OCI-LY7 (cell line): ENCODE measurements at regions of chr6 and their contacts with region 1.

Region 1: GRCh38 chr6:25223490-25223991 is 55.6 kb upstream of the CARMIL1 start:
- DNase-seq: peak; percentile 79
- H3K4me3 ChIP-seq: peak overlapping the region; percentile 62
- H3K27ac ChIP-seq: no peak overlapping the region
- H3K4me1 ChIP-seq: peaks cover 27% of the 10 kb centered on the region
- CTCF ChIP-seq: peak; percentile 100

Region 2: GRCh38 chr6:23688650-23689049 is 1534.9 kb before region 1 on chr6:
- CTCF ChIA-PET with region 1: no interaction called
- POLR2A ChIA-PET with region 1: no interaction called
- intact Hi-C with region 1: no loop called
- DNase-seq: no peak
- H3K4me3 ChIP-seq: no peak overlapping the region
- H3K27ac ChIP-seq: no peak overlapping the region
- H3K4me1 ChIP-seq: no peaks in the 10 kb centered on the region
- CTCF ChIP-seq: no peak

Region 3: GRCh38 chr6:24752917-24753490 is 470.5 kb before region 1 on chr6:
- CTCF ChIA-PET with region 1: no interaction called
- POLR2A ChIA-PET with region 1: no interaction called
- intact Hi-C with region 1: no loop called
- DNase-seq: no peak
- H3K4me3 ChIP-seq: no peak overlapping the region
- H3K27ac ChIP-seq: no peak overlapping the region
- H3K4me1 ChIP-seq: no peaks in the 10 kb centered on the region
- CTCF ChIP-seq: no peak

Region 4: DNA sequence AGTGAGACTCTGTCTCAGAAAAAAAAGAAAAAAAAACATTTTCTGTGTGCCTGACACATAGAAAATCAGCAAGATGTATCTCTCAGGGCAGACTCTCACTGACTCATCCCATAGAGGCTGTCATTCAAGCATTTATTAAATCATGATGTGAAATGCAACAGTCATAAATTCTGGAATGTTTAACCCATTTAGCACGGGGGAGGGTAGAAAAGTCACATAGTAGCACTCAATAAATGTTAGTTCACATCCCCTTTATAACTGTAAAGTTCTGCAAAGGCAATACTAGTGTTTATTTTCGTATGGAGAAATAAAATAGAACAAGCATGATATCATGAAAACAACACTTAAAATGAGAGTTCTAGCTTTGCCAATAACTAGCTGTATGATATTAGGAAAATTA is 40.1 kb after region 1 on chr6:
- CTCF ChIA-PET with region 1: no interaction called
- POLR2A ChIA-PET with region 1: no interaction called
- intact Hi-C with region 1: loop called (anchors 2 kb)
- DNase-seq: no peak
- H3K4me3 ChIP-seq: no peak overlapping the region
- H3K27ac ChIP-seq: no peak overlapping the region
- H3K4me1 ChIP-seq: peaks cover 12% of the 10 kb centered on the region
- CTCF ChIP-seq: no peak

Region 5: GRCh38 chr6:25435416-25435985 is 212.0 kb after region 1 on chr6:
- CTCF ChIA-PET with region 1: no interaction called
- POLR2A ChIA-PET with region 1: no interaction called
- intact Hi-C with region 1: no loop called
- DNase-seq: no peak
- H3K4me3 ChIP-seq: no peak overlapping the region
- H3K27ac ChIP-seq: no peak overlapping the region
- H3K4me1 ChIP-seq: peaks cover 31% of the 10 kb centered on the region
- CTCF ChIP-seq: no peak

Region 6: GRCh38 chr6:25490018-25490801 is 266.7 kb after region 1 on chr6:
- CTCF ChIA-PET with region 1: no interaction called
- POLR2A ChIA-PET with region 1: no interaction called
- intact Hi-C with region 1: loop called (anchors 2 kb)
- DNase-seq: peak; percentile 93
- H3K4me3 ChIP-seq: no peak overlapping the region
- H3K27ac ChIP-seq: peak overlapping the region; percentile 55
- H3K4me1 ChIP-seq: peaks cover 23% of the 10 kb centered on the region
- CTCF ChIP-seq: peak; percentile 90

Region 7: DNA sequence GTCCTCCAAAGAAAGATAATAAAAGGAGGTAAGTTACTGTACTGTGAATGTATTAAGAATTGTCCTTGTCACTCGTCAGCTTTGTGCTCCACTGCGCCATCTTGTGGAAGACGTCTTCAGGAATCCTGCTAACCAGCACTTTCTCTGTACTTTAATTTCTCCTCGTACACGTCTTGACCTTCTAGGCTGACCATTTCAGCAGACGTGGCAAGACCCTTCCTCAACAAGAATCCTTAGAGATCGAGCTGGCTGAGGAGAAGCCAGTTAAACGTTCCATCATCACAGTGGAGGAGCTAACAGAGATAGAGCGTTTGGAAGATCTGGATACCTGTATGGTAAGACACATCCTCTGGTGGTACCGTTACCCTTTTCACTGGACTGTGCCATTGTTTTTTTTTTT is 333.0 kb after region 1 on chr6:
- CTCF ChIA-PET with region 1: no interaction called
- POLR2A ChIA-PET with region 1: no interaction called
- intact Hi-C with region 1: loop called (anchors 2 kb)
- DNase-seq: peak; percentile 80
- H3K4me3 ChIP-seq: no peak overlapping the region
- H3K27ac ChIP-seq: no peak overlapping the region
- H3K4me1 ChIP-seq: peaks cover 7% of the 10 kb centered on the region
- CTCF ChIP-seq: peak; percentile 97

Region 8: GRCh38 chr6:25601800-25602673 is 378.5 kb after region 1 on chr6:
- CTCF ChIA-PET with region 1: interaction called, 3 read pairs
- POLR2A ChIA-PET with region 1: no interaction called
- intact Hi-C with region 1: loop called (anchors 1 kb)
- DNase-seq: peak; percentile 71
- H3K4me3 ChIP-seq: no peak overlapping the region
- H3K27ac ChIP-seq: no peak overlapping the region
- H3K4me1 ChIP-seq: peaks cover 5% of the 10 kb centered on the region
- CTCF ChIP-seq: peak; percentile 98

Region 9: DNA sequence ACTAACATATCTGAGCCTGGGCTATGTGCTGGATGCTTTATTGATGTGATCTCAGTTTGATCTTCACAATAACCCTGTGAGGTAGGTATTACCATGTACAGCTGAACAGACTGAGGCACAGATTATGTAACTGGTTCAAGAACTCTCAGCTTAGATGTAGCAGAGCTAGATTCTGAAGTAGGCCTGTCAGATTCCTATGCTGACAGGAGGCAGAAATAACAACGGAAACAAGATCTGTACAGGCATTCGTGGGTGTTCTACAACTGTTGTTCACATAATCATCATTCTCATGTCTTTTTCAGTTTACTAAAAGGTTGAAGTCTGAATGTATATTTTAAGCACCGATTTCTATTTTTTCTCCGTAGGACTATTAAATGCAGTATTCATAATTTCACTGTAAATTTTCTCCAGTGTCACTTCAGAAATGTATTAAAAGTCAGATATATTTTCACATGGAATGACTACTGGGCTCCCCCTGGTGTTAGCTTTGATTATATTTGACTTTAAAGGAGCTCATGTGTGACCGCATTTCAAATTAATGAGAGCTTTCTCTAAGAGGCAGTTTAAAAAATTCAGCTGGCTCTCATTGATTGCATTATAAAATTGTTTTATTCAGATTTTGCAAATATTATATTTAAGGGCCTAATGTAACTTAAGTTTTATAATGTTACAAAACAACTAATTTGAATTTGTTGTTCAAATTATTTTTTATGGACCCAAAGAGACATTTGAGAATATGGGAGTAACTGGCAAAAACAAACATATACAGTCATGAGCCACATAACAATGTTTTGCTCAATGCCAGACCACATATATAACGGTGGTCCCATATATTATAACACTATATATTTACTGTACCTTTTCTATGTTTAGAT is 494.6 kb after region 1 on chr6:
- CTCF ChIA-PET with region 1: interaction called, 4 read pairs
- POLR2A ChIA-PET with region 1: interaction called, 3 read pairs
- intact Hi-C with region 1: loop called (anchors 1 kb)
- DNase-seq: peak; percentile 59
- H3K4me3 ChIP-seq: no peak overlapping the region
- H3K27ac ChIP-seq: no peak overlapping the region
- H3K4me1 ChIP-seq: no peaks in the 10 kb centered on the region
- CTCF ChIP-seq: peak; percentile 91

Region 10: DNA sequence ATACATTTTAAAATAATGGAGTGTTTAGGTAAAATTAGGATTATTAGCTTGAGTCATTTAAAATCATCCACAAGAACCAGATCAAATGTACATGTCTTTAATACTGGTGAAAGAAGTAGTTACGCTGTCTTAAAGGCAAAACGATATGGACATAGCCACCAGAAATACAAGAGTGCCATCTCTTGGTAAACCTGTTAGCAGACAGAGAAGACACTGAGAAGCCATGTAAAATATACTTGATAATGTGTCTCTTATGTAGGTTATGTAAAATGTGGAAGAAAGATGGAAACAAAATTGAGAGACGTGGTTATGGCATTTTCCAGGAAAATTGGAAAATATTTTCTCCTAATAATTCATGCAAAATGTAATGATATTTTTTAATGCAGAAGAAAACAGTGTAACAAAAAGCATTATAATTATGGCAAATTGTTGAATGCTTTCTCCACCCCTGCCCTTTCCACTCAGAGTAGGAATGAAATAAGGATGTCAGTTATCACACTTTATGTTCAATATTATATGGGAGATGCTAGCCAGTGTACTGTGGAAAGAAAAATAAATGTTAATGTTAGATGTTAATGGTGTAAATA is 719.1 kb after region 1 on chr6:
- CTCF ChIA-PET with region 1: no interaction called
- POLR2A ChIA-PET with region 1: no interaction called
- intact Hi-C with region 1: loop called (anchors 10 kb)
- DNase-seq: peak; percentile 62
- H3K4me3 ChIP-seq: no peak overlapping the region
- H3K27ac ChIP-seq: no peak overlapping the region
- H3K4me1 ChIP-seq: no peaks in the 10 kb centered on the region
- CTCF ChIP-seq: peak; percentile 87